Activated naive CD4-positive, alpha-beta T cell treated with anti-CD3 and anti-CD28 coated beads, Interleukin-2, amount 10 ng/mL, durations not matched to agents 7 days and 5 days (primary cell): ENCODE measurements at regions of chr10 and their contacts with region 1.

Region 1: DNA sequence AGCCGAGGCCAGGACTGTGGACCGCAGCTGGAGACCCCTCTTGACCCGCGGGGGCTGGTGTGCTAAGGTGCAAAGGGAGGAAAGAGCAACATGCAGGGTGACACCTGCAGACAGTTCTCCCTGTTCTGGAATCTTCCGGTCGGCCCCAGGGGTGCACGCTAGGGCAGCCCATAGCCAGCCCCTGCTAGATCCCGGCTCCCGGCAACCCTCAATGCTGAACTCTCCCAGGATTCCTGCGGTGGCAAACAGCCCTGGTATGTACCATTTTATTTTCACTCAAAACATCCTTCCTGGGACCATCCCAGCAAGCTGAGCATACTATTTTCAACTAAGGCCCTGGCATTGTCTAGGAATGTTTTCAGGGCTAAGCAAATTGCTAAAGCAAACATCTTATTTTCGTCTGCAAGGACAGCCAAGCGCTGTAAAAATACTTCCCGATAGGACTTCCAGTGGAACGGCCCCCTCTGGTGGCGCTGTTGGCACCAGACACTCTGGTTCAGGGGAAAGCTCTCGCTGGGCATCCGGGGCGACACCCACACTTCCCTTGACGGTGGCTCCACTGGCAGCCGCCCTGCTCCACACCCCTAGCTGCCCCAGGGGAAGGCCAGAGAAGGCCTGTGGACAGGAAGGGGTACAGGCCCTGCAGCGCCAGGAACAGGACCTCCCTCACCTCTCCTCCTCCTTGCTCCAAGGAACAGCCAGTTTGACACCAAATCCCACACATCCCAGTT is 99.4 kb downstream of the CTBP2 start:
- DNase-seq: peak; percentile 58
- H3K4me3 Mint-ChIP-seq: no peak overlapping the region
- H3K27ac Mint-ChIP-seq: no peak overlapping the region
- H3K4me1 Mint-ChIP-seq: peaks cover 16% of the 10 kb centered on the region
- H3K27me3 Mint-ChIP-seq: peaks cover 49% of the 10 kb centered on the region

Region 2: DNA sequence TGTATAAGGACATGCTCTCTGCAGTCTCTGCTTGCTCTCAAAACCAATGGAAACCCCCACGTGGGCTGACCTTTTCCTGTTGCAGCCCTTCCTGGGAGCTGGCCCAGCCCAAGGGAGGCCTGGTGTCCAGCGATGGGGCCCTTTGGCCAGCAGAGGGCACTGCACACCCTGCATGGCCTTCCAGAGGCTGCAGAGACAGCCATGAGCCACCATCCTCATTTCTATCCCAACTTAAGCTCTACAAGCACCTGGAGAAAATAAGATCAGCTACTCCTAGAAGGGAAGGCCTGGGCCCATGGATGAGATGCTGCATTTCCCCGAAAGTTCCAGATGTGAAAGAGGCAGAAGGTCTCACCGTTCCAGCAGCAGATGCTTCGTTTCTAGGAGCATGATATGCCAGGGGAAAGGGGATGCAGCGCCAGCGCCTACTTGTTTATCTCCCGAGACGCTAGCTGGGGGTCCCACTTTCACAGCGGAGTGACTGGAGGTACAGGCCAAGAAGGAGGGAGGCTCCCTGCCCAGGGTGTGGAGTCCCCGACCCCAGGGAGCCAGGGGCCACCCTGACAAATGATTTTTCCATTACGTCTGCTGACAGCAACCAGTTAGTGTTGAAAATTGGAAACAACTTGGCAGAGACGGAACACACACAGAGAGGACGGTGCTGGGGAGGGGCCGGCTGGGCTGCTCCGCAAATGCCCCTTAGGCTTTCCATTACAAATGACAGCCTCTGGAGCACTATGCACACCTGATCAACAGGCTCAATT is 12.7 kb before region 1 on chr10:
- CTCF ChIA-PET with region 1: interaction called, 11 read pairs
- DNase-seq: peak; percentile 73
- H3K4me3 Mint-ChIP-seq: no peak overlapping the region
- H3K27ac Mint-ChIP-seq: no peak overlapping the region
- H3K4me1 Mint-ChIP-seq: no peaks in the 10 kb centered on the region
- H3K27me3 Mint-ChIP-seq: peaks cover 32% of the 10 kb centered on the region

Region 3: GRCh38 chr10:125137601-125138438 is 76.8 kb after region 1 on chr10:
- CTCF ChIA-PET with region 1: no interaction called
- DNase-seq: no peak
- H3K4me3 Mint-ChIP-seq: no peak overlapping the region
- H3K27ac Mint-ChIP-seq: no peak overlapping the region
- H3K4me1 Mint-ChIP-seq: no peaks in the 10 kb centered on the region
- H3K27me3 Mint-ChIP-seq: peaks cover 10% of the 10 kb centered on the region